IMR-90 (cell line): ENCODE measurements at regions of chr10 and their contacts with region 1.

Region 1: DNA sequence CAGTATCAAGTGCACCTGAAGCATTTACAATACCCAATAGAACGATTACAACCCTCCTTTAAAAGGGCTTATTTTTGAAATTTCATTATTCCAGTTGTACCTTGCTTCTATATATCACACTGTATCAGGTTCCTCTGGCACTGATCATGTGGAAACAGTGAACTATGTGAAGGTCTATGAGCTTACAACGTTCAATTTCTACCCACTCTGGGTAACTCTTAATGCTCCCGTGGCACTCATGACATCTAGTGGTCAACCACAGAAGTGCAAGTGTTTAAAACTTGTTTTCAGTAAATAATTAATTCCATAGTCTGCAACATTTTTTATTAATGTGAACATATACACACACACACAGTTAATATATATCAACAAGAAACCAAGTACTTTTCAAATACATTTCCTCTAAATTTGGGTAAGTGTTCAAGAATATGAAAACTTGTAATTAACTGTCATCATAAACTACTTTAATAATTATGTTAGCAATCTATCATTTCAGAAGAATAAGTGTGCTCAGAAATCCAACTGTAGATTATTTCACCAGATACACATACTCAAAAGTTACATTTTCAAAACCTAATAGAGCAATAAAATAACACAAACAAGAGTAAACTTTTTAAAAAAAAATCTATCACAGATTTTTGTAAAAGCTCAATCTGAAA is 61.0 kb downstream of the MPP7 start:
- DNase-seq: peak; percentile 70
- ATAC-seq: peak; percentile 97
- H3K4me3 ChIP-seq: no peak overlapping the region
- H3K27ac ChIP-seq: no peak overlapping the region
- H3K4me1 ChIP-seq: no peaks in the 10 kb centered on the region
- H3K27me3 ChIP-seq: peaks cover 2% of the 10 kb centered on the region; the same call in 1 of the 2 replicates
- CTCF ChIP-seq: peak; percentile 93
- POLR2A ChIP-seq: 0 out of 2 replicates have a peak, but pooled peaks have one; percentile 36
- RAD21 ChIP-seq: peak; percentile 94

Region 2: DNA sequence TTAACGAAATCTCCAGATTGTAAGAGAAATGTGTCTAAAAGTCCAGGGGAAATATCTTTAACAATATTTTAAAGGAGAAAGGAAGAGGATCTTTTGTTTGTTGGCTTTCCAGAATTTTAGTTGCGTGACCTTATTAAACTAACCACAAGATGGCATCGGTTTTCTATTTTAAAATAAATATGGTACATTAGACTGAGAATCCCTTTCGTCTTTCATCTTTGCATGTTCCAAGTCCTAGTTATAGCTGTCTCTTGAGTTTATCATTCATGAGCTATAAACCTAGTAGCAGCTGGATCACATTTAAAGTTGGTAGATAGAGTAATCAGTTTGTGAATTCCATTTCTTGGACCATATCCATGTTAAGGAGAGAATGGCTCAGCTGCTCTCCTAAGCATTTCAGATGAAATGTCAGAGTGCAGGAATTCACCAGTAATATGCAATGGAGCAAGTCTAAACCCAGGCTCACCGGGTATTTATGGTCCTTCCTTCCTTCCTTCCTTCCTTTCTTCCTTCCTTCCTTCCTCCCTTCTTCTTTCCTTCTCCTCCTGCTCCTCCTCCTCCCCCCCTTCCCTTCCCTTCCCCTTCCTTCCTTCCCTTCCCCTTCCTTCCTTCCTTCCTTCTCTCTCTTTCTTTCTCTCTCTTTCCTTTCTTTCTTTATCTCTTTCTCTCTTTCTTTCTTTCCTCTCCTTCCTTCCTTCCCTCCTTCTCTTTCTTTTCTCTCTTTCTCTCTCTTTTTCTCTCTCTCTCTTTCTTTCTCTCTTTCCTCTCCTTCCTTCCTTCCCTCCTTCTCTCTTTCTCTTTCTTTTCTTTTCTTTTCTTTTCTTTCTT is 795.6 kb before region 1 on chr10:
- CTCF ChIA-PET with region 1: interaction called, 4 read pairs
- POLR2A ChIA-PET with region 1: no interaction called
- dilution Hi-C with region 1: no loop called
- in situ Hi-C with region 1: no loop called
- intact Hi-C with region 1: loop called (anchors 1 kb)
- DNase-seq: peak; percentile 47
- ATAC-seq: peak; percentile 90
- H3K4me3 ChIP-seq: no peak overlapping the region
- H3K27ac ChIP-seq: peak overlapping the region; percentile 74; the same call in 1 of the 2 replicates
- H3K4me1 ChIP-seq: no peaks in the 10 kb centered on the region
- H3K27me3 ChIP-seq: no peaks in the 10 kb centered on the region; the same call in 1 of the 2 replicates
- CTCF ChIP-seq: peak; percentile 56
- POLR2A ChIP-seq: no peak
- RAD21 ChIP-seq: peak; percentile 44

Region 3: DNA sequence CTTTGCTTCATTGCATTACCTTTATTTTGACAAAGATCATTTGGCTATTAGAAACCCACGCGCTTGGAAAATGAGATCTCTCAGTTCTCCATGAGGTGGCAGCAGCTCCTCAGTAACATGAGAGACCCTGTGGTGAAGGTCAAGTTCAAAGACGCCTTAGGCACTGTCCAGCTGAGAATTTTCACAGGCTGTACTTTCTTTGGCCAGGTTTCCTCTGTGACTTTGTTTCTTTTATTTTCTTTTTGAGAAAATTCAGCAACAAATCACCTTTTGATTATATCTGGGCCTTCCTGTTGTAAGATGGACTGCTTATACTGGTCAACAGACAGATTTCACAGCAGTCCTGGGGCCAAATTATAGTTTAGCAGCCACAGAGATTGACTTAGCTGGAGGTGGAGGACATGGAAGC is 683.3 kb before region 1 on chr10:
- CTCF ChIA-PET with region 1: interaction called, 8 read pairs
- POLR2A ChIA-PET with region 1: no interaction called
- dilution Hi-C with region 1: no loop called
- in situ Hi-C with region 1: loop called (anchors 5 kb)
- intact Hi-C with region 1: loop called (anchors 1 kb)
- DNase-seq: peak; percentile 55
- ATAC-seq: peak; percentile 91
- H3K4me3 ChIP-seq: no peak overlapping the region
- H3K27ac ChIP-seq: no peak overlapping the region
- H3K4me1 ChIP-seq: no peaks in the 10 kb centered on the region
- H3K27me3 ChIP-seq: no peaks in the 10 kb centered on the region
- CTCF ChIP-seq: peak; percentile 80
- POLR2A ChIP-seq: no peak
- RAD21 ChIP-seq: peak; percentile 83

Region 4: GRCh38 chr10:27759483-27760272 is 482.2 kb before region 1 on chr10:
- CTCF ChIA-PET with region 1: no interaction called
- POLR2A ChIA-PET with region 1: no interaction called
- dilution Hi-C with region 1: no loop called
- in situ Hi-C with region 1: no loop called
- intact Hi-C with region 1: loop called (anchors 5 kb)
- DNase-seq: no peak
- ATAC-seq: no peak
- H3K4me3 ChIP-seq: no peak overlapping the region
- H3K27ac ChIP-seq: no peak overlapping the region
- H3K4me1 ChIP-seq: no peaks in the 10 kb centered on the region
- H3K27me3 ChIP-seq: peaks cover 11% of the 10 kb centered on the region
- CTCF ChIP-seq: 0 out of 2 replicates have a peak, but pooled peaks have one; percentile 13
- POLR2A ChIP-seq: no peak
- RAD21 ChIP-seq: no peak

Region 5: DNA sequence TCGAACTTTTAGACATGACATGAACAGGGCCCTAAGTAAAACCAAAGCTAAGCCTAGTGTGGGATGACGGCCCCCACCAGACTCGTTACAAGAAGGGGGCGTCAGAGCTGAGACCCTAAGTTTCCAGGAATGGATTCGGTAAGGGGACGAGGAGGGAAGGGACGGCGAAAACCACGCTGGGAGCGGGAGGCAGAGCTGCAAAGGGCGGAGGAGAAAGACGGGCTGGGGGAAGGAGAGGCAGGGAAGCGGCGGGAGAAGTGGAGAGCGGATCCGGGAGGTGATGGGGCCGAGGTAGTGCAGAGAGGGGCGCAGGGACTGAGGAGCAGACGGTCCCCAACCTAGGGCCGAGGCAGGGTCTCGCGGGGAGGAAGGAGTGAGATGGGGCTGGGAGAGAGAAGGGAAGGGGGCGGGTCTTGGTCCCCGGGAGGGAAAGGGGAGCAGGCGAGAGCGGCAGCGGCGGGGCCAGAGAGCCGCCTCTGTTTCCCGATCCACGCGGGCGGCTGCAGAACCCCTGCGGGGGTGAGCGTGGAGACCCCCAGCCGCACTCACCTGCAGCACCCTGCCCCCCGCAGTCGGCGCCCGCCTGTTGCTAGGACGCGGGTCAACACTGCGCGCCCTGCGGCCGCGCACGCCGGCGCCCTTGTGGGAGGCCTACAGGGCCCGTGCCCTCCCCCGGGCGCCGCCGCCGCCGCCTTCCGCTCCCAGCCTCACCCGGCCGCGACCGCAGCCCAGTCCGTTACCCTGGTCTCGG is 243.4 kb before region 1 on chr10:
- CTCF ChIA-PET with region 1: interaction called, 3 read pairs
- POLR2A ChIA-PET with region 1: no interaction called
- dilution Hi-C with region 1: no loop called
- in situ Hi-C with region 1: no loop called
- intact Hi-C with region 1: loop called (anchors 5 kb)
- DNase-seq: peak; percentile 12
- ATAC-seq: peak; percentile 89
- H3K4me3 ChIP-seq: peak overlapping the region; percentile 83
- H3K27ac ChIP-seq: peak overlapping the region; percentile 67
- H3K4me1 ChIP-seq: peaks cover 1% of the 10 kb centered on the region; the same call in 1 of the 2 replicates
- H3K27me3 ChIP-seq: no peaks in the 10 kb centered on the region
- CTCF ChIP-seq: no peak
- POLR2A ChIP-seq: no peak
- RAD21 ChIP-seq: no peak

Region 6: GRCh38 chr10:28370107-28370835 is 128.4 kb after region 1 on chr10:
- CTCF ChIA-PET with region 1: no interaction called
- POLR2A ChIA-PET with region 1: no interaction called
- dilution Hi-C with region 1: no loop called
- in situ Hi-C with region 1: no loop called
- intact Hi-C with region 1: no loop called
- DNase-seq: no peak
- ATAC-seq: no peak
- H3K4me3 ChIP-seq: no peak overlapping the region
- H3K27ac ChIP-seq: no peak overlapping the region
- H3K4me1 ChIP-seq: no peaks in the 10 kb centered on the region
- H3K27me3 ChIP-seq: peaks cover 15% of the 10 kb centered on the region
- CTCF ChIP-seq: no peak
- POLR2A ChIP-seq: no peak
- RAD21 ChIP-seq: no peak